ENCODE measurements at regions of chr1 and their contacts with region 1.

Region 1: GRCh38 chr1:26889551-26890466 is at the start of gene GPN2:
- DNase-seq: peak; percentile 69 to 73
- H3K4me3 ChIP-seq: peak within 1 kb of the TSS; percentile 96
- H3K4me3 Mint-ChIP-seq: peak within 1 kb of the TSS; percentile 88
- H3K27ac Mint-ChIP-seq: peak within 1 kb of the TSS; percentile 90
- H3K4me1 ChIP-seq: no peaks in the 10 kb centered on the region
- H3K4me1 Mint-ChIP-seq: peaks cover 11% of the 10 kb centered on the region
- H3K27me3 ChIP-seq: no peaks in the 10 kb centered on the region
- H3K27me3 Mint-ChIP-seq: no peaks in the 10 kb centered on the region
- CTCF ChIP-seq: no peak
- total RNA-seq, gene GPN2: 31.2 and 32.0 TPM in 2 replicates

Region 2: DNA sequence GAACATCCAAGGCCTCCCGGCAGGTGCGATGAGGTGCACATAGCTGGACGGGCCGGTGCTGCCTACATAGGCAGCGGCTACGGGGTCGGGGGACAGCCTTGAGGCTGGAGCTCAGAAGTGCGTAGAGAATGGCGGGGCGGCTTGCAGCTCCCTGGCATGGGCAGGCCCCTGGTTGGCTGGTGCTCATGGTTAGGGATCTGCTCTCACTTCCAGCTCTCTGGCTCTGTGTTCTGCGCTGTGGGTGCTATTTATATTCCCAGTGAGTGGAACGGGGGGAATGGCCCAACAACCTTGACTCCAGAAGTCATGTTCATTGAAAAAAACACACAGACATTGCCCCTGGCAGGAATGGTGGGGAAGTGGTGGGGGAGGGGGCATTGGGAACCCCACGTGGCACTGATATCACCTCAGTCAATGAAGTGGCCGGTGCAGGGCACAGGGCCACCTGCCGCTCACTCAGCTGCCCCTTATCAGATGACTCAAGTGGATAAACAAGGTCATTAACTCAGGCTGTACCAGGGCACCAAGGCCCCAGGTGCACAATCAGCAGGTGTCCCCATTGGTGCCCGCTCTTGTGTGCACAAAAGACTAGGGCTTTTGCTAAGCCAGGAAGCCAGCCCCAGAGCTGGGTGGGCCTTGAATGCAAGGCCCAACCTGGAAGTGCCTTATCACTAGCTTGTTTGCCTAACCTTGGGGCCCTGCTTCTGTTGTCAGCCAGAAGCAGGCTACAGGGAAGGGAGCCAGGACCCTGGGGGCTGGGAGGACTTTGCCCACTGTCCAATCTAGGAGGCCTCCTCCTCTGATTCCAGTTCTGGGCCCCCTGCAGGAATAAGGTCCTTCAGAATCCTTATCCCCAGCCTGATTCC is 24.2 kb after region 1 on chr1 and contains the start of gene NR0B2:
- CTCF ChIA-PET with region 1: interaction called, 3 read pairs
- POLR2A ChIA-PET with region 1: interaction called, 4 read pairs
- intact Hi-C with region 1: loop called (anchors 1 kb)
- DNase-seq: peak; percentile 83 to 93
- H3K4me3 ChIP-seq: no peak within 1 kb of the TSS
- H3K4me3 Mint-ChIP-seq: no peak within 1 kb of the TSS
- H3K27ac Mint-ChIP-seq: peak within 1 kb of the TSS; percentile 25
- H3K4me1 ChIP-seq: peaks cover 37% of the 10 kb centered on the region
- H3K4me1 Mint-ChIP-seq: peaks cover 15% of the 10 kb centered on the region
- H3K27me3 ChIP-seq: no peaks in the 10 kb centered on the region
- H3K27me3 Mint-ChIP-seq: no peaks in the 10 kb centered on the region
- CTCF ChIP-seq: no peak
- total RNA-seq, gene NR0B2: 0.34 TPM in 1 of 2 replicates, not detected in the other

Region 3: DNA sequence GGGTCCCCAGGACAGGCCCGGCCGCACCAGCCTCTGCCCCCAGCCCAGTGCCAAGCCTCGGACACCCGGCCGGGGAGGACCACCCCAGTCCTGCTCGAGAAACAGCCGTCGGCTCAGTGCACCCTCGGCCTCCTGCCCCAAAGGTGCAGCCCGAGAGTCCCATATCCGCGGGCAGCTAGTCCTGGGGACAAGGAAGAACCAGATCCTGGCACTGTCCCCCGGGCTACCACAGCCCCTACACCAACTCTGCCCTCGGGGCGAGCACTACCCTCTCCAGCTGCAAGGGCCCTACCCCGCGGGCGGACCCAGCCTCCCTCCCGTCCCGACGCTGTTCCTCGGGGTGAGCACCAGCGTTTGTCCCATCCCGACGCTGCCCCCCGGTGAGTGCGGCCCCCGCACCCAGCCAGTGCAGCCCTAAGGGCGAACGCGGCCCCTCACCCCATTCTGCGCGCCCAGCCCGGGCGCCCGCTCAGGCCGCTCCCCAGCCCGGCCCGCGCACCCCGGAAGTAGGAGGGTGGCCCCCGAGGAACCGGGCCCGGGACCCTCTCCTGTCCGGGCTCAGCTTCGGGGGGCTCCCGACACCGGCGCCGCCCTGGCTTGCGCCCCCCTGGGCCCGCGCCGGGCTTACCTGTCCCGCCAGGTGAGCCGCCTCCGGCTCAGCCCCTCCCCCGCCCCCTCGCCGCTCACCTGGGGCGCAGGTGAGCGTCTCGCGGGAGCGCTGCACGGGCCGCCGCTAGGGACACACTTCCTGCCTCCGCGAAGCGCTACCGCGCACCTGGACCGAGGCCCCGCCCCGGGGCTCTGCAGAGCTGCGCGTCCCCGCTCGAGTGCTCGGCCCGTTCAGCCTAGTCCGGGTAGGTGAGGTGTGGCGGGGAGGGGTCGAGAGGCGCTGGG is 70.2 kb after region 1 on chr1 and contains the start of gene KDF1:
- CTCF ChIA-PET with region 1: no interaction called
- POLR2A ChIA-PET with region 1: no interaction called
- intact Hi-C with region 1: no loop called
- DNase-seq: peak; percentile 87 to 92
- H3K4me3 ChIP-seq: peak within 1 kb of the TSS; percentile 90
- H3K4me3 Mint-ChIP-seq: peak within 1 kb of the TSS; percentile 84
- H3K27ac Mint-ChIP-seq: peak within 1 kb of the TSS; percentile 89
- H3K4me1 ChIP-seq: 0 out of 2 replicates have a peak, but pooled peaks cover 2% of the 10 kb centered on the region
- H3K4me1 Mint-ChIP-seq: no peaks in the 10 kb centered on the region
- H3K27me3 ChIP-seq: no peaks in the 10 kb centered on the region
- H3K27me3 Mint-ChIP-seq: no peaks in the 10 kb centered on the region
- CTCF ChIP-seq: peak; percentile 44 to 48
- total RNA-seq, gene KDF1: 13.5 and 14.1 TPM in 2 replicates

Region 4: GRCh38 chr1:27021354-27022031 is 131.7 kb after region 1 on chr1:
- CTCF ChIA-PET with region 1: no interaction called
- POLR2A ChIA-PET with region 1: no interaction called
- intact Hi-C with region 1: no loop called
- DNase-seq: no peak
- H3K4me3 ChIP-seq: no peak overlapping the region
- H3K4me3 Mint-ChIP-seq: no peak overlapping the region
- H3K27ac Mint-ChIP-seq: no peak overlapping the region
- H3K4me1 ChIP-seq: no peaks in the 10 kb centered on the region
- H3K4me1 Mint-ChIP-seq: peaks cover 18% of the 10 kb centered on the region
- H3K27me3 ChIP-seq: no peaks in the 10 kb centered on the region
- H3K27me3 Mint-ChIP-seq: no peaks in the 10 kb centered on the region
- CTCF ChIP-seq: no peak

Measured in Caco-2 (cell line).